Common myeloid progenitor, CD34-positive (primary cell): ENCODE measurements at regions of chr10 and their contacts with region 1.

Region 1: DNA sequence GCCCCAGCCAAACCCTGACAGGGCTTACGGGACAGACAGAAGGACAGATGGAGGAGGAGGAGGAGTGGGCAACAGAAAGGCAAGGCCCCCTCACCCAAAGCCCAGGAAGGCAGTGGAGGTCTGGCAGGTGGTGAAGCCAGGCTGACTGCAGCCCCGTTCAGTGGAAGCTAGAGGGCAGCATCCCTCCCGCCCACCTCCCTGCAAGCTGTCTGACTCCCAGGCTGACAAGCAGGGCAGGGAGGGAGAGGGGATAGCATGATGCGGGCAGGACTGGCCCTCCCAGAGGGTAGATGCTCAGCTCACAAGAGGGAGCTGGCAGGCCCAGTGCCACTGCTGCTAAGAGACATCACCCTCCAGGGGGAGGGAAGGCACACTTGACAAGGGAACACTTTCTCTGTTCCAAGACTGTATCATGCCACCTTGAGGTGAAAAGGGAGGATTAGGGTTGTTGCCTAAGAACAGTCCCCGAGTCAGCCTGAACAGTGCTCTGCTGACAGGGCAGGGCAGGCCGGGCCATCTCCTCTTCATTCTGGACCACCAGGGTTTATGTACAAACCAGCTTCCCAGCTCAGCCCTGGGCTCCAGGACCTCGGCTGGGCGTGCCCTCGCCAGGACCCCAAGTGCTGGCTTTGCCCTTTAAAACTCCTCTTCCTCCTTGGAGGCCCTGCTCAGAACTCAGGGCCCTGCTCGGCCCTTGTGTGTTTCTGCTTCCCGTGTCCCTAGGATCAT is 61.8 kb downstream of the RASGEF1A start:
- DNase-seq: peak; percentile 76 to 83 (median 82)
- H3K4me3 ChIP-seq: no peak overlapping the region
- H3K27ac ChIP-seq: no peak overlapping the region
- H3K4me1 ChIP-seq: peaks cover 0 to 24% (median 20%) of the 10 kb centered on the region in 4 experiments
- H3K27me3 ChIP-seq: no peaks in the 10 kb centered on the region

Region 2: DNA sequence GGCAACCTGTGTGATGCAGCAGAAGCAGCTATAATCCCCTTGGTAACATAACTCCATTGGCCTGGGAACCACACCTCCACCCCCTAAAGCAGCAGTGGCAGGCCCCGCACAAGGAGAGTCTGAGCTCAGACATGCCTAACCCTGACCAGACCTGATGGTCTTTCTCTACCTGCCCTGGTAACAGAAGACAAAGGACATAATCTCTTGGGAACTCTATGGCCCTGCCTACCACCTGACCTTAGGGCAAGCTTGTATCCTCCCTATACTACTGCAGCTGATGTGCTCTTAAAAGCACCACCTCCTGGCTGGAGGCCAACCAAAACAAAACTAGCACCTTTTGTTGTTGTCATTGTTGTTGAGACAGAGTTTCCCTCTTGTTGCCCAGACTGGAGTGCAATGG is 301.8 kb before region 1 on chr10:
- CTCF ChIA-PET with region 1: no interaction called
- POLR2A ChIA-PET with region 1: no interaction called
- DNase-seq: no peak
- H3K4me3 ChIP-seq: no peak overlapping the region
- H3K27ac ChIP-seq: no peak overlapping the region
- H3K4me1 ChIP-seq: no peaks in the 10 kb centered on the region
- H3K27me3 ChIP-seq: peaks cover 0 to 14% (median 5%) of the 10 kb centered on the region in 5 experiments

Region 3: GRCh38 chr10:43120929-43121314 is 84.2 kb before region 1 on chr10:
- CTCF ChIA-PET with region 1: interaction called, 10 read pairs
- POLR2A ChIA-PET with region 1: no interaction called
- DNase-seq: peak; percentile 92 to 99 (median 98)
- H3K4me3 ChIP-seq: peak overlapping the region in 3 of 7 experiments; percentile 7 to 30 (median 14)
- H3K27ac ChIP-seq: peak overlapping the region; percentile 66 to 69
- H3K4me1 ChIP-seq: peaks cover 10 to 55% (median 41%) of the 10 kb centered on the region in 4 experiments
- H3K27me3 ChIP-seq: no peaks in the 10 kb centered on the region

Region 4: GRCh38 chr10:43170491-43170890 is 34.6 kb before region 1 on chr10:
- CTCF ChIA-PET with region 1: interaction called, 21 read pairs
- POLR2A ChIA-PET with region 1: no interaction called
- DNase-seq: no peak
- H3K4me3 ChIP-seq: no peak overlapping the region
- H3K27ac ChIP-seq: no peak overlapping the region
- H3K4me1 ChIP-seq: peaks cover 0 to 16% (median 2%) of the 10 kb centered on the region in 4 experiments
- H3K27me3 ChIP-seq: no peaks in the 10 kb centered on the region

Region 5: GRCh38 chr10:43221419-43222209 is 16.5 kb after region 1 on chr10:
- CTCF ChIA-PET with region 1: interaction called, 87 read pairs
- POLR2A ChIA-PET with region 1: no interaction called
- DNase-seq: no peak
- H3K4me3 ChIP-seq: no peak overlapping the region
- H3K27ac ChIP-seq: no peak overlapping the region
- H3K4me1 ChIP-seq: no peaks in the 10 kb centered on the region
- H3K27me3 ChIP-seq: no peaks in the 10 kb centered on the region

Region 6: DNA sequence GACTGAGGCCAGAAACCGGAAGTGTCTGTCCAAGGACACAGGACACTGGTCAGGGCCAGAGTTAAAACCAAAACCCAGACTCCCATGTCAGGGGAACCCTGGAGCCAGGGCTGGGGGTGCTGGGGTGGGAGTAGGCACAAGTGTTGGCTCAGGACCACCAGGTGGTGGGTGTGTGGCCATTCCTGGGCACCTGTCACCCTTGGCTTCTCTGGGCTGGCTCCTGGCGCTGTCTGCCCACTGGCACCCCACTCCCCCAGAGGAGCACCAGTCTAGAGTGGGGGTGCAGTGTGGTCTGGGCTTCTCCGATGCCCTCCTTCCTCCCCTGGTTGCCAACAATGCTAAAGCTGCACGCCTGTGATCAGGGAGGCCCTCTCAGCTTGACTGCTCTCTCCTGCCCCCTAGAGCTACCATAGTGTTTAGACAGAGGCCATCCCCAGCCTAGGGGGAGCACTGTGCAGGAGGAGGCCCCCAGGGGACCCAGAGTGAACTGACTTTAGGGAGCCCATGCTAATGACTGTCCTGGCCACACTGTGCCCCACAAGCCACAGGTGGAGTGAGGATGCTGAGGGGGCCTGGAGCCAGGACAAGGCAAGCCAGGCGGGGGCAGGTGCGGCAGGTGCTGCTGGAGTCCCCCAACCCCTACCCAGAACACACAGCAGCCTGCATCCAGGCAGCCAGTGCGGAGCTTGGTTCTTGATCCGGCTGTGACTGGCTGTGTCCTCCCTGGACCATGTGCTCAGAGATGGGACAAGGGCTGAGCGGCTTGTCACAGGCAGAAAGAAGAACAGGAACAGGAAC is 50.7 kb after region 1 on chr10:
- CTCF ChIA-PET with region 1: interaction called, 18 read pairs
- POLR2A ChIA-PET with region 1: no interaction called
- DNase-seq: peak in 2 of 3 donors; percentile 59 to 64
- H3K4me3 ChIP-seq: no peak overlapping the region
- H3K27ac ChIP-seq: no peak overlapping the region
- H3K4me1 ChIP-seq: peaks cover 0 to 34% (median 22%) of the 10 kb centered on the region in 4 experiments
- H3K27me3 ChIP-seq: no peaks in the 10 kb centered on the region